ENCODE measurements at regions of chr15 and their contacts with region 1.

Region 1: DNA sequence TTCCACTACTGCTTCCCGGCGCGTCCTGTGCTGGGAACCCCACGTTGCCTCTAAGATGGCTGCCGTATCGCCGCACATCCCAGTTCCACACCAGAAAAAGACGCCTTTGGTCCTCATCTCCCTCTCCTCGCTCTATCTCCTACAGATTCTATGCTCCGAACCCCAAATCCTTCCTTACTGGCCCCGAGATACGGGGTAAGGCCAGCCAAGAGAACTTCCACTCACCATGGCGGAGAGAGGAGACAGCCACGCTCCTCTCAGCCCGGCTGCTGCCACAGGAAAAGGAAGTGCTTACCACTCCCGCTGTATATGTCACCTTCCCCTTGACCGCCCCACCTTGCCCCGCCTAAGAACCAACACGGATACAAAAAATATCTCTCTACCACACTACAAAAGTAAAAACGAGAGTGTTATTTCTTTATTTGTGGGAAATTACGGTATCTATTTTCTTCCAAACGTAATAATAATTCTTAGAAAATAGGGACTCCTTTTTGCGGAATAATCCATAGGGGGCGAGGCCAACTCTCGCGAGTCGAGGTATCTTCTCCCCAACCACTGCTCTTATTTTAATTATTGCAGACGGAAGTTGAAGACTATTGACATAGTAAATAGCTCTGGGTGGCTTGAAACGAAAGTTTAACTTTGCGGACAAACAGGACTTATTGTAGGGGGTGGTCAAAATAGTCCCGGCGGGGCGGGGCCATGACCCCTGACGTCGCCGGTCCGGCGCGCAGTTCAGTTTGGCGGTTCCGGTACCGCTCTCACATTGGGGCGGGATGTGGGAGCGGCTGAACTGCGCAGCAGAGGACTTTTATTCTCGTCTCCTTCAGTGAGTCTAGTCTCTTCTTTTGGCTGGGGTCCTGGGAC is at the starts of genes RPL4 and ZWILCH:
- DNase-seq: peak; percentile 78
- ATAC-seq: peak; percentile 83
- H3K4me3 ChIP-seq: peak within 1 kb of the TSS; percentile 99
- H3K27ac ChIP-seq: peak within 1 kb of the TSS; percentile 97
- H3K4me1 ChIP-seq: peaks cover 4% of the 10 kb centered on the region; the same call in 1 of the 2 replicates
- H3K27me3 ChIP-seq: no peaks in the 10 kb centered on the region
- CTCF ChIP-seq: no peak
- EP300 ChIP-seq: no peak
- POLR2A ChIP-seq: peak; percentile 98
- RAD21 ChIP-seq: no peak
- polyA plus RNA-seq, gene RPL4: 3,668 to 5,406 TPM
- polyA plus RNA-seq, gene ZWILCH: 34.4 to 51.6 TPM

Region 2: DNA sequence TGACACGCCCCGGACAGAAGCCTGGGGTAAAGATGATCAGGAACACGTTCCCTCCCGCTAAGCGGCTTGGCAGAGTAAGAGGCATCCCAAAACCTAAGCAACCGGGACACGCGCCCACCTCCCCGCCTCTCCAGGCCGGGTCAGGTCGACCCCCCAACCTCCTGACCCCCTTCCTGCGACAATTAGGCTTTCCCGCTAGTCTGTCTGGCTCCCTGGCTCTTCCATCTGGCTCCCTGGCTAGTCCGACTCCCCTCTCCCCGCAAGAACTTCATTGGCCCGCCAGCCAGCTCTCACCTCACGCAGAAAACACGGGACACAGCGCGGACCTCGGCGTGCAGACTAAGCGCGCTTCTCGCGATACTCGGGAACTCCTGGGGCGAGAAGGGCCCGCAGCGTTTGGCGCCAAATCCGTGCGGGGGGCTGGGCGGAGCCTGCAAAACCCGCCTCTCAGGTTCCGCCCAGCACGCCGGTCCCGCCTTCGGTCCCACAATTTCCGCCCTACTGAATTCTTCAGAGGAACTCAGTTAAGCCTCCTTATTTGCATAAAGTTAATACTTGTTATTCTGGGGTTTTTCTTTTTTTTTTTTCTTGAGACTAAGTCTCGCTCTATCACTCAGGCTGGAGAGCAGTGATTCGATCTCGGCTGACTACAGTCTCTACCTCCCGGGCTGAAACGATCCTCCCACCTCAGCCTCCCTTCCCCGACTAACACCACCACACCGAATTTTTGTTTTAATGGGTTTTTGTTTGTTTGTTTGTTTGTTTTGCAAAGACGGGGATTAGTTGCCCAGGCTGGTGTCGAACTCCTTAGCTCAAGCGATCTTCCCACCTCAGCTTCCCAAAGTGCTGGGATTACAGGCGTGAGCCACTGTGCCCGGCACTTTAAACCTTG is 148.2 kb before region 1 on chr15 and contains the start of gene TIPIN:
- CTCF ChIA-PET with region 1: interaction called, 23 read pairs
- POLR2A ChIA-PET with region 1: interaction called, 6 read pairs
- RAD21 ChIA-PET with region 1: interaction called, 3 read pairs
- SMC1A ChIA-PET with region 1: no interaction called
- in situ Hi-C with region 1: loop called (anchors 5 kb)
- intact Hi-C with region 1: no loop called
- DNase-seq: peak; percentile 87
- ATAC-seq: peak; percentile 96
- H3K4me3 ChIP-seq: peak within 1 kb of the TSS; percentile 99
- H3K27ac ChIP-seq: peak within 1 kb of the TSS; percentile 76
- H3K4me1 ChIP-seq: peaks cover 8% of the 10 kb centered on the region
- H3K27me3 ChIP-seq: no peaks in the 10 kb centered on the region
- CTCF ChIP-seq: no peak
- EP300 ChIP-seq: no peak; a peak in 1 of 4 replicates
- POLR2A ChIP-seq: peak; percentile 97
- RAD21 ChIP-seq: no peak
- polyA plus RNA-seq, gene TIPIN: 52.8 to 59.2 TPM

Region 3: DNA sequence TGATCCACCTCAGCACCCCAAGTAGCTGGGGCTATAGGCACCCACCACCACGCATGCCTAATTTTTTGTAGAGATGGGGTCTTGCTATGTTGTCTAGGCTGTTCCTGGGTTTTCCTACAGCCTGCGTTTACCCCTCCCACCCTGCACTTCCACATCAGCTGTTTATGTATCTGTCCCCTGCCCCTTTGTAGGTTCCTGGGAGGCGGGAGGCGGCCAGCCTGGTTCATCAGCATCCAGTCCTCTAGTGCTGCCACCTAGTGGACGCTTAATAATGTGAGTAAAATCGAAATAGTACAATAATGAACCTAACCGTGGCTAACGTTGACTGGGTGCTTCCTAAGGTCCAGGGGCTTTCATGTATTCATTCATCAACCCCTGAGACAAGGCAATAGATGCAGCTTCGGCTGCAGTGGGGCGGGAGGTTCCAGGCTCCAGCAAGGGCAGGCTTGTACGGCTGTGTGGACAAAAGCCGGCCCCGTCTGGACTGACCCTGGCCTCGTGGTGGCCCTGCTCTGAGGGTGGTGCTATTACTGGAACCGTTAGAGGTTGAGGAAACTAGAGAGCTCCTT is 62.3 kb after region 1 on chr15:
- CTCF ChIA-PET with region 1: interaction called, 5 read pairs
- POLR2A ChIA-PET with region 1: no interaction called
- RAD21 ChIA-PET with region 1: no interaction called
- SMC1A ChIA-PET with region 1: interaction called, 3 read pairs
- in situ Hi-C with region 1: no loop called
- intact Hi-C with region 1: loop called (anchors 2 kb)
- DNase-seq: peak; percentile 17
- ATAC-seq: peak; percentile 95
- H3K4me3 ChIP-seq: no peak overlapping the region
- H3K27ac ChIP-seq: no peak overlapping the region
- H3K4me1 ChIP-seq: no peaks in the 10 kb centered on the region
- H3K27me3 ChIP-seq: no peaks in the 10 kb centered on the region
- CTCF ChIP-seq: peak; percentile 58 to 63 (median 60)
- EP300 ChIP-seq: no peak
- POLR2A ChIP-seq: no peak
- RAD21 ChIP-seq: peak; percentile 46